ENCODE measurements at regions of chr15 and their contacts with region 1.

Region 1: DNA sequence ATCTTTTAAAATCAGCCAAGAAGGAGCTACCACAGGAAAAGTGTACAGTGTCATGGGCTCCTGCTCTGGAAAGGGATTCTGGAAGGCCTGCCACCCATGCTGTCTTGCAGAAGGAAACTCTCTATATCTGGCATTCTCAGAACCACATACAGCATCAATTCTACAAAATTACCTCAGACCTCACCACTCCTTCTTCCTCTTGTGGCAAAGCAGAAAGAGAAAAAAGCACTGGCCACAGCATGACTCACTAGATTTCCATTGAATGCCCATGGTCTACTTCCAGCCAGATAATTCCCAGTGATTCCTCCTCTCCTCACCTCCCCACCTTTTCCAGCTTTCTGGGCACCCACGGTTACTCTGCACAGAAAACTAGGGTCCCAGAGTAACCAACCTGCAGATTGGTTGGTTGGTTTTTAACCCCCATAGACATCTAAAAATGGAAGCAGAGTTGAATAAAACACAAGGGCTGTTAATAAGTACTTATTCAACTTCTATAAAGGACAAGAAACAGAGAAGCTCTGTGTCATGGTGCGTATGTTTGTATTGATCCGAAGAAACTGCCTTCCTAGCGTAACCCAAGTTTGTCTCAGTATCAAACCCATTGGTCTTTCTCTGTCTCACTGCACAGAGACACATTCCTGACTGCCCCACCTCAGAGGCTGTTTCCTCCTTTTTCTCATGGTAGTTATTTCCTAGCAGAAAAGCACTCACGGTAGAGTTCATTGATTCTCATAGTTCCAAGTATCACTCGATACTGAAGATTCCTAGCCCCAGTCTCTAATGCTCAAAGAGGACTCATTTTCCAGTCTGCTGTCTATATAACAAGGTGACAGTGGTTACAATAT is 67.7 kb downstream of the LDHAL6B start:
- DNase-seq: no peak
- ATAC-seq: 0 out of 2 replicates have a peak, but pooled peaks have one; percentile 26
- H3K4me3 ChIP-seq: no peak overlapping the region
- H3K27ac ChIP-seq: peak overlapping the region; percentile 74
- H3K4me1 ChIP-seq: peaks cover 85% of the 10 kb centered on the region
- H3K27me3 ChIP-seq: no peaks in the 10 kb centered on the region
- CTCF ChIP-seq: no peak

Region 2: GRCh38 chr15:59656897-59657634 is 382.7 kb after region 1 on chr15 and contains the start of gene GTF2A2:
- CTCF ChIA-PET with region 1: interaction called, 10 read pairs
- POLR2A ChIA-PET with region 1: no interaction called
- in situ Hi-C with region 1: no loop called
- intact Hi-C with region 1: no loop called
- DNase-seq: peak; percentile 71
- ATAC-seq: peak; percentile 100
- H3K4me3 ChIP-seq: peak within 1 kb of the TSS; percentile 93 to 94
- H3K27ac ChIP-seq: peak within 1 kb of the TSS; percentile 95
- H3K4me1 ChIP-seq: peaks cover 10% of the 10 kb centered on the region; the same call in 1 of the 2 replicates
- H3K27me3 ChIP-seq: no peaks in the 10 kb centered on the region
- CTCF ChIP-seq: no peak
- total RNA-seq, gene GTF2A2: 234 TPM

Measured in Panc1 (cell line).